GM10248 (cell line): ENCODE measurements at regions of chr1 and their contacts with region 1.

Region 1: DNA sequence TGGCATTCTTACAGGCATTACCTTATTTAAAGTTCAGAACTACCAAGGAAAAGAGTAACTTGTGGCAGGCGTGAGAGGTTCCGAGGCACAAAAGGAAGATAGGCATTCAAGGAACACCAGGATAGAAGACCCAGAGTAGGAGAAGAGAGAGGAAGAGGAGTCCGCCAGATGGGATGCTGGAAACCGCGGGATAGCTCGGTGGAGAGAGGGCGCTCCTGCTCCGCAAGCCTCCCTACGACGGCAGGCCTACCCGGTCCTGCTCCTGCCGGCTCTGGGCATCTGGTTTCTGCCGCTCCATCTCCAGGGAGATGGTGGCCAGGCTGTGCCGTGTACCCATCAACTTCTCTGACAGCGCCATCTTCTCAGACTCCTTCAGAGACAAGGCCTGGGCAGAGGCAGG is 5.4 kb upstream of the NBPF1 start:
- DNase-seq: no peak
- CTCF ChIP-seq: no peak

Region 2: GRCh38 chr1:16315437-16315836 is 303.3 kb before region 1 on chr1:
- CTCF ChIA-PET with region 1: no interaction called
- POLR2A ChIA-PET with region 1: no interaction called
- DNase-seq: no peak
- CTCF ChIP-seq: no peak

Region 3: GRCh38 chr1:16607433-16607851 is 11.3 kb before region 1 on chr1:
- CTCF ChIA-PET with region 1: interaction called, 61 read pairs
- POLR2A ChIA-PET with region 1: no interaction called
- DNase-seq: no peak
- CTCF ChIP-seq: no peak

Region 4: GRCh38 chr1:16631248-16632043 is 12.7 kb after region 1 on chr1:
- CTCF ChIA-PET with region 1: interaction called, 39 read pairs
- POLR2A ChIA-PET with region 1: no interaction called
- DNase-seq: no peak
- CTCF ChIP-seq: no peak

Region 5: DNA sequence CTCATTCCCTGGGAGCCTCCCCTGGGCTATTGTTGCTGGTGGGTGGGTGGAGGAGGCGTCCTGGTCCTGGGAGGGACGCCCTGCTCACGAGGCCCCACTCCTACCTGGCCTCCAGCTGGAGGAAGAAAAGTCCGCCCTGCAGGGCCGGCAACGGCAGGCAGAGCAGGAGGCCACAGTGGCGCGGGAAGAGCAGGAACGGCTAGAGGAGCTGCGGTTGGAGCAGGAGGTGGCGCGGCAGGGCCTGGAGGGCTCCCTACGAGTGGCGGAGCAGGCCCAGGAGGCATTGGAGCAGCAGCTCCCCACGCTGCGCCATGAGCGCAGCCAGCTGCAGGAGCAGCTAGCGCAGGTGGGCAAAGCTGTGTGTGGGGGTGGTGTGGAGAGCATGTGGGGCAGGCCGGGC is 327.9 kb after region 1 on chr1:
- CTCF ChIA-PET with region 1: interaction called, 26 read pairs
- POLR2A ChIA-PET with region 1: no interaction called
- DNase-seq: no peak
- CTCF ChIP-seq: no peak

Region 6: DNA sequence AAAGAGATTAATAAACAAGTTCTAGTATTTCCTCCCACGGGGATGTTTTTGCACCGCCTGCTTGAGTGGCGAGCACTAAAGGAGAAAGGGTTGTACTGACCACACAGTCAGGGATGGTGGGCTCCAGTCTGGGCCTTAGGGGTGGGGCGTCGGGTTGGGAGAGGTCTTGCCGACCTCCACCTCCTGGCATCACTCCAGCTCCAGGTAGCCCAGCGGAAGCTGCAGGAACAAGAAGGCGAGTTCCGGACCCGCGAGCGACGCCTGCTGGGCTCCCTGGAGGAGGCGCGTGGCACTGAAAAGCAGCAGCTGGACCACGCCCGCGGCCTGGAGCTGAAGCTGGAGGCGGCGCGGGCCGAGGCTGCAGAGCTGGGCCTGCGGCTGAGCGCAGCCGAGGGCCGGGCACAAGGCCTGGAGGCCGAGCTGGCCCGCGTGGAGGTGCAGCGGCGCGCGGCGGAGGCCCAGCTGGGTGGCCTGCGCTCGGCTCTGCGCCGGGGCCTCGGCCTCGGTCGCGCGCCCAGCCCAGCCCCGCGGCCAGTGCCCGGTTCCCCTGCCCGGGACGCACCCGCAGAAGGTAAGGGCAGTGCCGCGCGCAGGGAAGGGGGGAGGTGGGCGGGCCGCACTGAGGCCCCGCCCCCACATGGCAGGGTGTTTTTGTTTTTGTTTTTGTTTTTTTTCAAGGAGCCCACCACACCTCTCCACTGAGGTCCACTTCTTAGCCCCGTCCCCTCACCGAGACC is 342.0 kb after region 1 on chr1:
- CTCF ChIA-PET with region 1: interaction called, 41 read pairs
- POLR2A ChIA-PET with region 1: no interaction called
- DNase-seq: peak; percentile 79
- CTCF ChIP-seq: peak; percentile 84

Region 7: GRCh38 chr1:17045634-17046333 is 427.1 kb after region 1 on chr1:
- CTCF ChIA-PET with region 1: interaction called, 13 read pairs
- POLR2A ChIA-PET with region 1: no interaction called
- DNase-seq: peak; percentile 49
- CTCF ChIP-seq: peak; percentile 56